Pancreas (tissue), 10 donors: ENCODE measurements at regions of chr1 and their contacts with region 1.

Region 1: DNA sequence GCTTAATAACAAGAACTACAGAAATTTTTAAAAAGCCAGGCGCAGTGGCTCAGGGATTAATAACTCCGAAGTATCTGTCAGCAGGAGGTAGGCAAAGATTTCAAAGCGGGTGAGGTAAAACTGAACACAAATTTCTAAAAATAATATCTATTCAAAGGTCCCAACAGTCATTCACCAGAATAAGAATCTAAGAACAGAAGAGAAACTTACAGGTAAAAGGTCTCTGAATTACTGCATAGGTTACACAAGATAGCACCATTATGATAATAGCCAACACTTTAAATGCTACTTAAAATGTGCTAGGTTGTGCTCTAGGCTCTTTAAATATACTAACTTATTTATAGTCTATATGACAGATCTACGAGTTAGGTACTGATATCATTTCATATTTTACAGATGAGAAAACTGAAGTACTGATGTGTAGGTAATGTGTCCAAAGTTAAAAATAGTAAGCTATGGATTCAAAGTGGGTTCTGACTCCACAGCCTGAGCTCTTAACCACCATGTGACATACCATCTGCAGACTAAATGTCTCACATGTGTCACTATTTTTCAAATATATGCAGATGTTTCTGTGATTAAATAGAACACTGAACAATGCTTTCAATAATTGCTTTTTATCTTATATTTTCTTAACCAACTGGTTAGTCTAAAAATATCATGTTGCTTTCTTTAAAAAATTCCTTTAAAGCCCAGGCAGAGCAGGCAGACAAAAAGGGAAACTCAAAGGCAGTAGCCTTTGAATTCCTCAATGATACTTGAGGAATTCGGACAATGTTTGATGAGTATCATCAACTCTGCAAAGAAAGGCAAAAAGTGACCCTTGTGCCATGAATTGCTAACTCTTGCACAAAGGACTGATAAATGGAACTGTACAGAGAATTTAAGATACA is 80.5 kb upstream of the TTC39A start:
- DNase-seq: no peak
- ATAC-seq: no peak
- H3K4me3 ChIP-seq: no peak overlapping the region
- H3K27ac ChIP-seq: no peak overlapping the region
- H3K4me1 ChIP-seq: no peaks in the 10 kb centered on the region
- H3K27me3 ChIP-seq: no peaks in the 10 kb centered on the region
- CTCF ChIP-seq: no peak

Region 2: DNA sequence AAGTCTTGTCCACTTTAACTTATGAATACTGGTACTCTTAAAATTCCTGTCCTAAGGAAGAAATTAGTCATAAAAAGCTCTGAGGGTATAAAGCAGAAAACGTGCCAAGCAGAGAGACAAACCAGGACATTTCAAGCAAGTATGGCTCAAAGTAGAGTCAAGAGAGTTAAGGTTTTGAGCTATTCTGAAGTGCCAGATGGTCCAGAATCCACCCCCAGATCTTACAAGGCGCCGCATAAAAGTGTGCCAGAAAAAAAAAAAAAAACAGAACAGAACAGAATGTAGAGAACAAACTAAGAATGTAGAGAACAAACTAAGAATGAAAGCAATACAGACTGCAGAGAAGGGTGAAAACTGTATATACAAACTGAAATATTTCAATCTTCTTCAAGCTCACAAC is 95.7 kb after region 1 on chr1:
- intact Hi-C with region 1: loop called in 1 of 3 experiments (anchors 10 kb)
- DNase-seq: no peak
- ATAC-seq: peak; percentile 27 to 63 (median 58)
- H3K4me3 ChIP-seq: no peak overlapping the region
- H3K27ac ChIP-seq: no peak overlapping the region
- H3K4me1 ChIP-seq: peaks cover 7 to 24% (median 17%) of the 10 kb centered on the region in 3 donors
- H3K27me3 ChIP-seq: no peaks in the 10 kb centered on the region
- CTCF ChIP-seq: no peak

Region 3: DNA sequence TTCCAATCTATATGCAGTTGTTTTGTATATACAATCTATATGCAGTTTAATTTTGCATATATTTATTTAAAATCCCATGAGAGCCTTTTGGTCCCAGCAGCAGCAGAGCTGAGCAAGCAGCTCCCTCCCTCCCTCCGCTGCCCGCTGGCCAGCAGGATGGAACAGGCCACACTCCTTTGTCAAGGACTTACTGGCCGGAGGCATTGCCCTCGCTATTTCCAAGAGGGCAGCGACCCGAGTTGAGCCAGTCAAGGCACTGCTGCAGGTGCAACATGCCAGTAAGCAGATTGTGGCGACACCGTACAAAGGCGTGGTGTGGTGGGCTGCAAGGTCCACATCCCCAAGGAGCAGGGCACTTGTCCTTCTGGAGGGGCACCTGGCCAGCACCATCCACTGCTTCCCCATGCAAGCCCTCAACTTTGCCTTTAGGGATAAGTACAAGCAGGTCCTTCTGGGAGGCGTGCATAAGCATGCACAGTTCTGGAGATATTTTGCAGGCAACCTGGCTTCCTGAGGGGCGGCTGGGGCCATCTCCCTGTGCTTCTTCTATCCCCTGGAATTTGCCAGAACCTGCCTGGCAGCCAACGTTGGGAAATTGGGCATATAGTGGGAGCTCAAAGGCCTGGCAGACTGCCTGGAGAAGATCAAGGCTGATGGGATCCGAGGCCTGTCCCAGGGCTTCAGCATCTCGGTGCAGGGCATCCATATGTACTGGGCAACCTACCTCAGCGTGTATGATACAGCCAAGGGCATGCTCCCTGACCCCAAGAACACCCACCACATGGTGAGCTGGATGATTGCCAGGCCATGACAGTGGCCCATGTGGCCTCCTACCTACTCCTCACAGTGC is 298.3 kb after region 1 on chr1:
- intact Hi-C with region 1: no loop called
- DNase-seq: peak in 2 of 6 donors; percentile 28 to 37
- ATAC-seq: no peak
- H3K4me3 ChIP-seq: no peak overlapping the region
- H3K27ac ChIP-seq: no peak overlapping the region
- H3K4me1 ChIP-seq: no peaks in the 10 kb centered on the region
- H3K27me3 ChIP-seq: no peaks in the 10 kb centered on the region
- CTCF ChIP-seq: no peak